Activated CD4-positive, alpha-beta memory T cell treated with anti-CD3 and anti-CD28 coated beads, Interleukin-2, amount 10 ng/mL, durations not matched to agents 7 days and 5 days (primary cell): ENCODE measurements at regions of chr16 and their contacts with region 1.

Region 1: DNA sequence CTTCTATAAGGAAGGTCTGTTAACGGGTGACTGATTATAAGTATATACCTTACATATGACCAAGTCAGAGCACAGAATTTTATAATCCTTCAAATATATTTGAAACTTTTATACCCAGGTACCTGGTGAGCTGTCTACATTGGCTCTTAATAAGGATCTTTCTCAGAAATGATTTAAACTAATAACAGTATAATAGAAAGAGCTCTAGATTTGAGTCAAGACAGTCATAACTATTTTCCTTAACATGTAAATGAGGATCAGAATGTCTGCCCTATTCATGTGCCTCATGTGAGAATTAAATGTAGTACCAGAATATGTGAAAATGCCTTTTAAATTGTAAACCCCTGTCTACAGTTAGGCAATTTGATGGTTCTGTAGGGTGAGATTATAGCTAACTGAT is 14.5 kb downstream of the CBFB start:
- DNase-seq: no peak
- H3K4me3 Mint-ChIP-seq: no peak overlapping the region
- H3K27ac Mint-ChIP-seq: no peak overlapping the region
- H3K4me1 Mint-ChIP-seq: peaks cover 38% of the 10 kb centered on the region
- H3K27me3 Mint-ChIP-seq: no peaks in the 10 kb centered on the region

Region 2: GRCh38 chr16:66830422-66831404 is 212.7 kb before region 1 on chr16 and contains the start of gene NAE1:
- CTCF ChIA-PET with region 1: no interaction called
- POLR2A ChIA-PET with region 1: no interaction called
- DNase-seq: peak; percentile 90
- H3K4me3 Mint-ChIP-seq: peak within 1 kb of the TSS; percentile 73
- H3K27ac Mint-ChIP-seq: peak within 1 kb of the TSS; percentile 63
- H3K4me1 Mint-ChIP-seq: peaks cover 41% of the 10 kb centered on the region
- H3K27me3 Mint-ChIP-seq: no peaks in the 10 kb centered on the region
- total RNA-seq, gene NAE1: 76.5 to 78.2 TPM

Region 3: DNA sequence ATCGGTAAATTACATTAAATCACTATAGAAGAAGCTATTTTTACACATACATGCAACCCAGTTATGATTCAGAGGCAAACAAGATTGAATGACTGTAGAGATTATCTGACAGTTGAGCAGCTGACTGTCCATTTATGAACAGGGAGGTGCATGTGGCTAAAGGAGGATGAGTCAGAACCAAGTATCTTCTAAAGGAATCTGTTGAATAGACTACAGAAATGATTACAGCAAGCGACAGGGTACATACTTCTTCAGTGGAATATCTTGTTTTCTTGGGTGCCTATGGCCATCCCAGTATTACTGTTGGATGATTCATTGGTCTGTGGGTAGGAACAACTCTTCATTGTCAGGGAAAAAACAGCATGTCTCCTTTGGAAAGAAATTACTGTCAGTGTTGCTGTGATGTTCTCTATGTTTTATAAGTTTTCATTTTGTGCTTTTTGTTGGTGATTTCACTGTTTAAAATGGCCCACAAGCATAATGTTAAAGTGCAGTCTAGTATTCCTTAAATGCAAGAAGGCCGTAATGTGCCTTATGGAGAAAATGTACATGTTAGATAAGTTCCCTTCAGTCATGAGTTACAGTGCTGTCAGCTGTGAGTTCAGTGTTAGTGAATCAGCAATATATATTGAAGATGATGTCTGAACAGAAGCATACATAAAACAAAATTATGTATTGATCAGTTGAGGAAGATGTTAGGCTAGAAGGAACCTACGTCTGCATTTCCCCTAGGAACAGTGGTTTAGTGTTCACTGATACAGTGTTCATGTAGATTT is 12.5 kb after region 1 on chr16:
- CTCF ChIA-PET with region 1: interaction called, 4 read pairs
- POLR2A ChIA-PET with region 1: interaction called, 22 read pairs
- DNase-seq: peak; percentile 30
- H3K4me3 Mint-ChIP-seq: peak overlapping the region; percentile 13
- H3K27ac Mint-ChIP-seq: peak overlapping the region; percentile 85
- H3K4me1 Mint-ChIP-seq: peaks cover 66% of the 10 kb centered on the region
- H3K27me3 Mint-ChIP-seq: no peaks in the 10 kb centered on the region